ENCODE measurements at regions of chr1 and their contacts with region 1.

Region 1: DNA sequence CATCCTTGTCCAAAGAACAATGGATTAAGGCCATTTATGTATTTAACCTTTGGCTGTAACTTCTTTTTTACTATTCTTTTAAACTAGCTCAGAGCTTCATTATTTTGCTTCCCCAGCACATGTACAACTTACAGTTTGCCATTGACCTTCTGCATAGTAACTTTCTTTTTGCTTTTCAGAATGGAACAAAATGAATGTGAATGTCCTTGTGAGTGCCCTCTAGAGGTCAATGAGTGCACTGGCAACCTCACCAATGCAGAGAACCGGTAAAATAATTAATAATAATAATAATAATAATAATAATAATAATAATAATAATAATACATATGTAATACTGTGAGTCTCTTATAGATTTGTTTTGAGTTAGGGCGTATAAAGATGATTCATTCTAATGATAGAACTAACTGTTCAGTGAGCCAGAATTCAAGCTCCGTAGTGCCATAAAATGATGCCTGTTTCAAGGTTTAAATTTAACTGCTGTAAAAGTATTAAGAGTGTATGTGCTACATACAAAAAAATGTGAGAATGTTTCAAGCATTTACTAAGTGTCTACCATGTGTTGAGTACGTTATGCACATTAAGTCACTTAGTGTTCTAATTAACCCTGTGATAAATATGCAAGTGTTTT is 69.0 kb upstream of the RAVER2 start:
- DNase-seq: no peak

Region 2: DNA sequence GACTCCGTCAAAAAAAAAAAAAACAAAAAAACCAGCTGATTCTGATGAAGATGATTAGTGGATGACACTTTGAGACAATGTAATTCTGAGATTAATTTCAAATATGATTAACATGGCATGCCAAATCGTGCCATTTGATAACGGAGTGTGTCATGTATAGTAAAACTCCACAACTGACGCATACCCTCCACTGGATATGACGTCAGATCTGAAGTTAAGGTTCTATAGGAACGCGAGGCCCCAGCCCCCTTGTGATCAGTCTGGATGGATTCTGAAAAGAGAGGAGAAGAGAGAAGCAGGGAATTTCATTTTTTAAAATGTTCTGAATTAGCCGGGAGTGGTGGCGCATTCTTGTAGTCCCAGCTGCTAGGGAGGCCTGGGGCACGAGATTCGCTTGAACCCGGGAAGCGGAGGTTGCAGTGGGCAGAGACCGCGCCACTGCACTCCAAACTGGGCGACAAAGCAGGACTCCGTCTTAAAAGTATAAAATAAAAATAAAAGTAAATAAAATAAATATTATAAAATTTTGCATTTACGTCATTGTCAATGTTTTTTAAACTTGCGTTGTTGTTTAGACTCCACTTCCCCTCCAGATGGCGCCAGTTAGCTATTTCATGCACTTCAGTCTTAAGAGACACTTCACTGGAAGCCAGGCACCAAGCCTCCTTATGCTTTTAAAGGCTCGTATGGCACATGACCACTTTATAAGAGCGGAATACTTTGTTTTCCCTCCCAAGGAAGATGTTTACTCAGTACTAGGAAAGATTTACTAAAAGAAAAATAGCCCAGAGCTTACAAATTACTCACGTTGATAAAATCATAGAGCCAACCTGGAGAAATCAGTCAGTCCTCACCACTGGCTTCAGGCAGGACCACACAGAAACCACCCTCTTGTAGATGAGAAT is 406.9 kb before region 1 on chr1:
- intact Hi-C with region 1: loop called (anchors 2 kb)
- DNase-seq: peak in 7 of 10 donors; percentile 51 to 81 (median 67)

Region 3: GRCh38 chr1:64469977-64470664 is 205.7 kb before region 1 on chr1 and contains the start of gene CACHD1:
- intact Hi-C with region 1: loop called (anchors 10 kb)
- DNase-seq: peak; percentile 50 to 94 (median 70)

Region 4: GRCh38 chr1:64616039-64616438 is 59.8 kb before region 1 on chr1:
- intact Hi-C with region 1: no loop called
- DNase-seq: no peak